Psoas muscle (tissue), 8 donors: ENCODE measurements at regions of chr3 and their contacts with region 1.

Region 1: GRCh38 chr3:8895829-8896228 is 67.4 kb downstream of the RAD18 start:
- DNase-seq: no peak
- ATAC-seq: no peak
- H3K4me3 ChIP-seq: no peak overlapping the region
- H3K27ac ChIP-seq: no peak overlapping the region
- H3K4me1 ChIP-seq: no peaks in the 10 kb centered on the region
- H3K27me3 ChIP-seq: no peaks in the 10 kb centered on the region
- CTCF ChIP-seq: no peak

Region 2: DNA sequence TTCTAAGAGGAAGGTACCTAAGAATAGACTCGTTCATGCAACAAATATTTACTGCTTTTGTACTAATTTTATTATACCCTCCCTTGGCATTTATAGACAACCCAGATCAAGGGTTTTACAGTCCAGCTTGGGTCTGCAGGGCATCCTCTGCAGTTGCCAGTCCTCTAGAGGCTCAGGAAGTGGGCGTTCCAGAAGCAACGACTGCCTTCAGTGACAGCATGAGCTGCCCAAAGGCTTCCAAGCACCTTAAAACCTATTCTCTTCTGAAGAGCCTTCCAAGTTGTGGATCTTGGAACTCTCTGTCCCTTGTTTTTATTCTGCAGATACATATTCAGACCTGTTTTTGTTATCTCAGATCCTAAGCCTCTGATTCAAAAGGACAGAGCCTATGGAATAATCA is 28.2 kb before region 1 on chr3:
- intact Hi-C with region 1: loop called in 1 of 2 experiments (anchors 1 kb)
- DNase-seq: no peak
- ATAC-seq: no peak
- H3K4me3 ChIP-seq: no peak overlapping the region
- H3K27ac ChIP-seq: no peak overlapping the region
- H3K4me1 ChIP-seq: no peaks in the 10 kb centered on the region
- H3K27me3 ChIP-seq: no peaks in the 10 kb centered on the region
- CTCF ChIP-seq: no peak